ENCODE measurements at regions of chr7 and their contacts with region 1.

Region 1: GRCh38 chr7:76393116-76394031 is 16.1 kb downstream of the SSC4D start:
- DNase-seq: peak; percentile 87
- H3K4me3 Mint-ChIP-seq: peak overlapping the region; percentile 71
- H3K27ac Mint-ChIP-seq: peak overlapping the region; percentile 93
- H3K4me1 Mint-ChIP-seq: peaks cover 11% of the 10 kb centered on the region
- H3K27me3 Mint-ChIP-seq: no peaks in the 10 kb centered on the region
- CTCF ChIP-seq: no peak

Region 2: DNA sequence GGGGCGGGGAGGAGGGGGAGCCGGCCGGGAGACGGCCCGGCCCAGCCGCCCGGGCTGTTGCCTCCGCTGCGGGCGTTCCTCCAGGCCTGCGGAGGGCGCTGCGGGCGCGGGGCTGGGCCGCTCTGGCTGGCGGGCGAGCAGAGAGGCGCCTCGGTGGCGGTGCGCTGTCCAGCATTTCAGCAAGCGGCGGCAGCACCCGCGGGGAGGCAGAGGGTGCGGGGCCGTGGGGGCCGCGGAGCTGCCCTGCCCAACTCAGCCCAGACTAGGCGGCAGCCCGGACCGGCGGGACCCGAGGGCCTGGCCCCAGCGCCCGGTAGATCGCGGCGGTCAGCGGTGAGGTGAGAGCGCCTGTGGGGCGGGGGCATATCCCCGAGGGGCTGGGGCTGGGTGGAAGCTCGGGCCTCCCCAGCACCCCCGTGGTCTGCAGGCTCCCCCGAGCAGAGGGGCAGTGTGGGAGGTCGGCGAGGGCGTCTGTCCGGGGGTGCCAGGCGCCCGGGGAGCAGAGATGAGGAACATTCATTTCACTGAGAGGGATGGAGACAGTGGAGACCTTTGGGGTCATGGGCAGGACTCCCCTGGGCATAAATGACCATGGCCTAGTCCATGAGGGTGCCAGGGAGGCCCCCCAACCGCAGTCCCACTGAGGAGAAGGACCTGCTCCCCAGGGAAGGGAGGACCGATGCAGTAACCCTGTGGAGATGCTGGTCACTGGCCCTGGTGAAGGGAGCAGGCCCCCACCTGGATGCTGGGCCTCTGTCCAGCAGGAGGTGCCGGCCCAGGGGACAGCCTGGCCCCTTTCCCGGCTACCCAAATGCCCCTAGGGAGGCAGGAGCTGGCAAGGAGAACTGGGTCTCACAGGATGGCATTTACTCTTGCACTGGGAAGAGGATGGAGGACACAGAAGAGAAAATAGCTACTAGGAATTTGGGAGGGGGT is 191.4 kb before region 1 on chr7 and contains the start of gene SRRM3:
- CTCF ChIA-PET with region 1: no interaction called
- POLR2A ChIA-PET with region 1: no interaction called
- intact Hi-C with region 1: no loop called
- DNase-seq: peak; percentile 60
- H3K4me3 Mint-ChIP-seq: no peak within 1 kb of the TSS
- H3K27ac Mint-ChIP-seq: no peak within 1 kb of the TSS
- H3K4me1 Mint-ChIP-seq: no peaks in the 10 kb centered on the region
- H3K27me3 Mint-ChIP-seq: peaks cover 31% of the 10 kb centered on the region
- CTCF ChIP-seq: peak; percentile 75
- total RNA-seq, gene SRRM3: 0.70 and 0.71 TPM in 2 replicates

Region 3: GRCh38 chr7:76340617-76341131 is 52.7 kb before region 1 on chr7:
- CTCF ChIA-PET with region 1: no interaction called
- POLR2A ChIA-PET with region 1: no interaction called
- intact Hi-C with region 1: no loop called
- DNase-seq: peak; percentile 40
- H3K4me3 Mint-ChIP-seq: no peak overlapping the region
- H3K27ac Mint-ChIP-seq: no peak overlapping the region
- H3K4me1 Mint-ChIP-seq: peaks cover 60% of the 10 kb centered on the region
- H3K27me3 Mint-ChIP-seq: no peaks in the 10 kb centered on the region
- CTCF ChIP-seq: no peak

Region 4: DNA sequence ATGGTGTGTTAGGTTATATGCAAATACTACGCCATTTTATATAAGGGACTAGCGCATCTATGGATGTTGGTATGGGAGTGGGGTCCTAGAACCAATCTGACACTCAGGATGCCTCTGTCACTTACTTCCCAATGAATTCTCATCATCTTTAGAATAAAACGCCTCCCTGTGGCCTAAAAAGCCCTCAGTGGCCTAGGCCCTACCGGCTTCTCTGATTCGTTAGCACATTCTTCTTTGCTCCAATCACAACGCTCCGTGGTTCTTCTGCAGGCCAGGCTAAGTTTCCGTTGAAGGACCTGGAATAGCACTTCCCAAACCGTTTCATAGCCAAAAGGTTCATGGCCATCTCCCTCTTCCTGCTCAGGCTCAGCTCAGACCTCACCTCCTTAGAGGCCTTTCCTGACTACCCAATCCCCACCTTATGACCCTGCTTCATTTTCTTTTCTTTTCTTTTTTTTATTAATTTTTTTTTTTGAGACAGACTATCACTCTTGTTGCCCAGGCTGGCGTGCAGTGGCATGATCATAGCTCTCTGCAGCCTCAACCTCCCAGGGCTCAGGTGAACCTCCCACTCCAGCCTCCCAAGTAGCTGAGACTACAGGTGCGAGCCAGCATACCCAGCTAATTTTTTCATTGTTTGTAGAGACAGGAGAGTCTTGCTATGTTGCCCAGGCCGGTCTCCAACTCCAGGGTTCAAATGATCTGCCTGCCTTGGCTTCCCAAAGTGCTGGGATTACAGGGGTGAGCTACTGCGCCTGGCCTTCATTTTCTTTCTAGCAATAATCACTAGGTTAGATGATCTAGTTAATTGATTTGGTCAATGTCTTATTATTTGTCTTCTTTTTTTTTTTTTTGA is 10.1 kb before region 1 on chr7:
- CTCF ChIA-PET with region 1: no interaction called
- POLR2A ChIA-PET with region 1: no interaction called
- intact Hi-C with region 1: no loop called
- DNase-seq: no peak
- H3K4me3 Mint-ChIP-seq: no peak overlapping the region
- H3K27ac Mint-ChIP-seq: no peak overlapping the region
- H3K4me1 Mint-ChIP-seq: peaks cover 5% of the 10 kb centered on the region
- H3K27me3 Mint-ChIP-seq: no peaks in the 10 kb centered on the region
- CTCF ChIP-seq: no peak

Region 5: DNA sequence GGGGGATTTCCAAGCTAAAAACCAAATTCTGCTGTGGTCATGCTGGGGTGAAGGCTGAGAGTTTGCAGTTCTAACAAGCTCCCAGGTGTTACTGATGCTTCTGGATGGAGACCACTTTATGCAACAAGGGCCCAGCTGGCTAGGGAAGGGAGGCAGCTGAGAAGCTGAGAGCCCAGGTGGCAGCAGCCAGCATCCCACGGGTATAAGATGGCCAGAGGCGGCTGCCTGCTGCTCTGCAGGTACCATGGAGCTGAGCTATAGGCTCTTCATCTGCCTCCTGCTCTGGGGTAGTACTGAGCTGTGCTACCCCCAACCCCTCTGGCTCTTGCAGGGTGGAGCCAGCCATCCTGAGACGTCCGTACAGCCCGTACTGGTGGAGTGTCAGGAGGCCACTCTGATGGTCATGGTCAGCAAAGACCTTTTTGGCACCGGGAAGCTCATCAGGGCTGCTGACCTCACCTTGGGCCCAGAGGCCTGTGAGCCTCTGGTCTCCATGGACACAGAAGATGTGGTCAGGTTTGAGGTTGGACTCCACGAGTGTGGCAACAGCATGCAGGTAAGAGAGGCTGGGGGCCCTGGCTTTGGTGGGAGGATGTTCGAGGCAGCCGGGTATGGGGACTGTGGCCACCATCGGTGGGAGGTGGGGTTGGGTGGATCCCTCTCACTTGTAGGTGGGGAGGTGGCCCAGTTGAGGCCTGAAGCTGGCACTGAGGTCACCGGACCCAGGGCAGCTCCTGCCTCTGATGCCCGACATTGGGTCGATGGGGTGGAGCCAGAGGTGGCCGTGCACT is 31.5 kb after region 1 on chr7 and contains the start of gene ZP3:
- CTCF ChIA-PET with region 1: interaction called, 3 read pairs
- POLR2A ChIA-PET with region 1: interaction called, 17 read pairs
- intact Hi-C with region 1: no loop called
- DNase-seq: no peak
- H3K4me3 Mint-ChIP-seq: peak within 1 kb of the TSS; percentile 1
- H3K27ac Mint-ChIP-seq: peak within 1 kb of the TSS; percentile 86
- H3K4me1 Mint-ChIP-seq: peaks cover 21% of the 10 kb centered on the region
- H3K27me3 Mint-ChIP-seq: no peaks in the 10 kb centered on the region
- CTCF ChIP-seq: no peak
- total RNA-seq, gene ZP3: 5.6 TPM in 2 replicates

Measured in MCF 10A (cell line).